H1 (cell line): ENCODE measurements at regions of chr12 and their contacts with region 1.

Region 1: DNA sequence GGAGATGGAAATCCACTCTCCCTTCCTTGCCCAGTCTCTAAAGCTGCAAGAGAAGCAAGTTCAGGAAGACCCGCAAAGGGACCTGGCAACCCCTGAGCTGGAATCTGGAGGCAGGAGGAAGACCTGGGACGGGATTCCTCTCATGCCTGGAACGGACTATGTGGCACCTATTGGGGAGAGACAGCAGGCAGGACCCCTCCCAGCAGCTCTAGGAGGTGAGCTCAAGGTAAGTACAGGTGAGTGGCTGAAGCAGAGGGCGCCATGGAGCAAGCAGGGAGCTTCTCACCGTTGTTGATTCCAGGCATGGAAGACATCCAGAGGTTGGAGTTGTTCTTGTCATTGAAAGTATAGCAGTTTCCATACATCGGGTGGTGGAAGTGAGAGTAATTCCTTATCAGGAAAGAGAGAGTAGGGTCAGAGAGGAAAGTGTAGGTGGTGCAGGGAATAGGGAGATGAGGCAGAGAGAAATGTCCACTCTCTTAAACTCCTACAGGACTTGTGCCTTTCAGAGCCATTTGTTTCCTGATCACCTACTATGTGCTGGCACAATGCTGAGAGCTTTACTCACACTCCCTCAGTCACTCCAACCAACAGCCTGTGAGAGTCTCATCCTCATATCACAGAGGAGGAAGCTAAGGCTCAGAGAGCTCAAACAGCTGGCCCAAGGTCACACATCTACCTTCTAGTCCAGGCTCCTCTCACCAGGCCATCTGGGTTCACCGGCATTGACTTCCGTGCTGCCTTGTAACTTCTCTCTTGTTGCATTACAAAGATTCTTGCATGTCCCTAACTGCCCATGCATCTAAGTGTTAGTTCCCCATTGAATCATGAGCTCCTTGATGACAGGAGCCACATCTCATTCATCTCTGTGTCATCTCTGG is 13.9 kb upstream of the TNFRSF1A start:
- DNase-seq: peak; percentile 53 to 74
- H3K4me3 ChIP-seq: no peak overlapping the region
- H3K27ac ChIP-seq: no peak overlapping the region
- H3K4me1 ChIP-seq: peaks cover 0 to 9% (median 0%) of the 10 kb centered on the region in 4 experiments; a peak in 4 of 7 replicates
- H3K27me3 ChIP-seq: no peaks in the 10 kb centered on the region
- CTCF ChIP-seq: peak; percentile 50 to 72 (median 69)
- EP300 ChIP-seq: 0 out of 3 replicates have a peak, but pooled peaks of 1 of the 2 experiments have one; percentile 22
- POLR2A ChIP-seq: no peak
- RAD21 ChIP-seq: peak; percentile 43 to 60; a peak in 3 of 4 replicates

Region 2: DNA sequence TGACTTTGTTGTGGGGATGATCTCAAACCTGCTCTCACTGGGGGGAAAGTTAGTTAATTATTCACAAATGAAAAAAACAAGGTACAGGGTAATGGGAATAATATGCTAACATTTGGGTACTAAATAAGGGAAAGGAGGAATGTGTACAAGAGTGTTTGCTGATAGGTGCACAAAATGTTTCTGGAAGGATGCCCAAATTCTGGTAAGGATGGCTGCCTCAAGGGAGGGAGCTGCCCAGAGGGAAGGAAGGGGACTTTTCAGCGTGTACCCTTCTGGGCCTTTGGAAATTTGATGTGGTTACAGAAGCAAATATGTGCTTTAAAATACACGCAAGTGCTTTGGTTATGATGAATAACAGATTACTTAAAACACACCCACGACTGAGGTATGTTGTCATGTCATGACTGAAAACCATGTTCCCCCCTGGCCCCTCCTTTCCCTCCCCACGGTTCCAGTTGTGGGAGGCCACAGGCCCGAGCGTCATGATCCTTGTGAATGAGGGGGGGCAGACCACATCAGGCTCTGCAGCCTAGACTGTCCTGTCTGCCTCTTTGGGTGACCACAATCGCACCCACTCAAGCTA is 88.5 kb before region 1 on chr12:
- CTCF ChIA-PET with region 1: no interaction called
- POLR2A ChIA-PET with region 1: no interaction called
- DNase-seq: no peak
- H3K4me3 ChIP-seq: no peak overlapping the region
- H3K27ac ChIP-seq: no peak overlapping the region
- H3K4me1 ChIP-seq: peaks cover 9 to 17% (median 13%) of the 10 kb centered on the region in 4 experiments
- H3K27me3 ChIP-seq: no peaks in the 10 kb centered on the region
- CTCF ChIP-seq: no peak
- EP300 ChIP-seq: no peak
- POLR2A ChIP-seq: no peak
- RAD21 ChIP-seq: no peak

Region 3: DNA sequence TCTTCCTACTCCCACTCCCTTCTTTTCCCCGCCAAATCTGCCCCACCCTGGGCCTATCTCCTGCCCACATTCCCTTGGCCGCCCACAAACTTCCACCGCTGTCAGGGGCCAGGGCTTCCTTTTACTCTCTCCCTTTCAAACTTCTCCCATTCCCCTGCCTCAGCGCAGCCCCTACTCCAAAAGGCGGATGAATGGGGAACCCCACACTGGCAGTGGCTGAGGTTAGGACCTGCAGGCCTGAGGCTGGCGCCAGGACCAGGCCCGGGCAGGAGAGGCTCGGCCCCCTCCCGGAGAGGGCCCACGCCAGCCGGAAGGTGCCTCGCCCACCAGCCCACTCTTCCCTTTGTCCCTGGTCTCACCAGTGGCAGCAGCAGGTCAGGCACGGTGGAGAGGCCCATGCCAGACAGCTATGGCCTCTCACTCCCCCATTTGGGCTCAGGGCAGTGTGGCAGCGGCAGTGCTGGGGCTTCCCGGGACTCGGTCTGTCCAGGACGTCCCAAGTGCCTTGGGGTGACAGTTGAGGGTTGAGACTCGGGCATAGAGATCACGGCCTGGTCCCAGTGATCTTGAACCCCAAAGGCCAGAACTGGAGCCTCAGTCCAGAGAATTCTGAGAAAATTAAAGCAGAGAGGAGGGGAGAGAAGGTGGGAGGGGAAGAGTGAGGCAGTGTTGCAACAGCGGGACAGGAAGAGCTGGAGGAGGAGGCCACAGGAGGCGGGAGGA is 14.2 kb before region 1 on chr12 and contains the start of gene TNFRSF1A:
- CTCF ChIA-PET with region 1: interaction called, 74 read pairs
- POLR2A ChIA-PET with region 1: interaction called, 141 read pairs
- DNase-seq: no peak
- H3K4me3 ChIP-seq: peak within 1 kb of the TSS; percentile 54 to 89 (median 82)
- H3K27ac ChIP-seq: peak within 1 kb of the TSS; percentile 44; the same call in 1 of the 2 replicates
- H3K4me1 ChIP-seq: peaks cover 22 to 50% (median 30%) of the 10 kb centered on the region in 4 experiments
- H3K27me3 ChIP-seq: no peaks in the 10 kb centered on the region
- CTCF ChIP-seq: no peak
- EP300 ChIP-seq: no peak
- POLR2A ChIP-seq: no peak
- RAD21 ChIP-seq: no peak
- total RNA-seq, gene TNFRSF1A: 42.1 and 45.8 TPM in 2 replicates

Region 4: GRCh38 chr12:6367065-6367968 is 11.6 kb after region 1 on chr12:
- CTCF ChIA-PET with region 1: interaction called, 14 read pairs
- POLR2A ChIA-PET with region 1: interaction called, 42 read pairs
- DNase-seq: no peak
- H3K4me3 ChIP-seq: no peak overlapping the region
- H3K27ac ChIP-seq: no peak overlapping the region
- H3K4me1 ChIP-seq: peaks cover 10 to 23% (median 14%) of the 10 kb centered on the region in 4 experiments
- H3K27me3 ChIP-seq: no peaks in the 10 kb centered on the region
- CTCF ChIP-seq: 0 out of 4 replicates have a peak, but pooled peaks of 1 of the 3 experiments have one; percentile 3
- EP300 ChIP-seq: no peak
- POLR2A ChIP-seq: no peak
- RAD21 ChIP-seq: peak in 1 of 2 experiments; percentile 9; a peak in 1 of 4 replicates

Region 5: GRCh38 chr12:6376079-6376869 is 20.5 kb after region 1 on chr12:
- CTCF ChIA-PET with region 1: interaction called, 25 read pairs
- POLR2A ChIA-PET with region 1: interaction called, 42 read pairs
- DNase-seq: peak; percentile 54 to 74
- H3K4me3 ChIP-seq: peak overlapping the region; percentile 64 to 84 (median 74)
- H3K27ac ChIP-seq: peak overlapping the region; percentile 92
- H3K4me1 ChIP-seq: peaks cover 5 to 47% (median 33%) of the 10 kb centered on the region in 4 experiments
- H3K27me3 ChIP-seq: peaks cover 0 to 2% (median 0%) of the 10 kb centered on the region in 4 experiments; a peak in 2 of 7 replicates
- CTCF ChIP-seq: peak in 2 of 3 experiments; percentile 41 to 58; a peak in 3 of 4 replicates
- EP300 ChIP-seq: no peak
- POLR2A ChIP-seq: peak in 1 of 2 experiments; percentile 69; a peak in 2 of 3 replicates
- RAD21 ChIP-seq: peak; percentile 30 to 55

Region 6: DNA sequence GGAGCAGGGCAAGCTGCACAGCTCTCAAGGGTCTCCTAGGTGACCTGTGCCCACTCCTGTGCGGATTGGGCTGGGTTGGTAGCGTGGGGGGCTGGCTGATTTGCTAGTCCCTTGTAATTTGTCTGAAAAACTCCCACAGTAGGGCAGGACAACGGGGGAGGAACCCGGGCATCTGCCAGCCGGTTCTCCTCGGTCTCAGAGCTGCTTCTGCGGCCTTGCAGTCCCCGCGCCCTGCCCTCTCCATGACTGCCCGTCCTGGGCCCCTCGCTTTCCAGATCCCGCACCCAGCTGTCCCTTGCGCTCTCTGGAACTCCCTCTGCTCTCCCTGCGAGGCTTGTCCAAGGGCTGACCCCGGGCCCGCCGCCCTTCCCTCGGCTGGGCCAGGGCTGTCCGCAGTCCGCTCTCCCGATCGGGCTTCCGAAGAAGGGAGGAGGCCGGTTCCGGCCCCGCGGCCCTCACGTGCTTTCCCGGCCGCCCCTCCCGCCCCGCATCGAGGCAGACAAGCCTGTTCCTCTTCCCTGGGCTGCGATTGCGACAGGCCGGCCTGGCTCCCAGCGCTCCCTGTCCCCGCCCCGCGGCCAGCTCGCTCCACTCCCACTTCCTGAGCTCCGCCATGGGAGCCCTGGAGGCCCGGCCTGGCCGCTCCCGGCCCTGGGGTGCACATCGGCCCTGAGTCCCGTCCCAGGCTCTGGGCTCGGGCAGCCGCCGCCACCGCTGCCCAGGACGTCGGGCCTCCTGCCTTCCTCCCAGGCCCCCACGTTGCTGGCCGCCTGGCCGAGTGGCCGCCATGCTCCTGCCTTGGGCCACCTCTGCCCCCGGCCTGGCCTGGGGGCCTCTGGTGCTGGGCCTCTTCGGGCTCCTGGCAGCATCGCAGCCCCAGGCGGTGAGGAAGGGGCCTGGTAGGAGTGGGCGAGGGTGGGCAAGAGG is 28.1 kb after region 1 on chr12 and contains the start of gene LTBR:
- CTCF ChIA-PET with region 1: interaction called, 13 read pairs
- POLR2A ChIA-PET with region 1: interaction called, 3 read pairs
- DNase-seq: peak in 1 of 2 experiments; percentile 85
- H3K4me3 ChIP-seq: peak within 1 kb of the TSS in 1 of 4 experiments; percentile 37; a peak in 2 of 8 replicates
- H3K27ac ChIP-seq: no peak within 1 kb of the TSS
- H3K4me1 ChIP-seq: peaks cover 0 to 27% (median 20%) of the 10 kb centered on the region in 4 experiments; a peak in 6 of 7 replicates
- H3K27me3 ChIP-seq: peaks cover 0 to 26% (median 20%) of the 10 kb centered on the region in 4 experiments; a peak in 6 of 7 replicates
- CTCF ChIP-seq: 0 out of 4 replicates have a peak, but pooled peaks of 1 of the 3 experiments have one; percentile 3
- EP300 ChIP-seq: no peak
- POLR2A ChIP-seq: no peak; a peak in 1 of 3 replicates
- RAD21 ChIP-seq: peak in 1 of 2 experiments; percentile 11; a peak in 1 of 4 replicates
- total RNA-seq, gene LTBR: 6.3 and 6.7 TPM in 2 replicates